Left cardiac atrium (tissue), 4 donors: ENCODE measurements at regions of chr7 and their contacts with region 1.

Region 1: GRCh38 chr7:139118234-139118804 is 8.8 kb upstream of the ZC3HAV1 start:
- DNase-seq: no peak
- ATAC-seq: peak in 1 of 2 donors; percentile 77

Region 2: DNA sequence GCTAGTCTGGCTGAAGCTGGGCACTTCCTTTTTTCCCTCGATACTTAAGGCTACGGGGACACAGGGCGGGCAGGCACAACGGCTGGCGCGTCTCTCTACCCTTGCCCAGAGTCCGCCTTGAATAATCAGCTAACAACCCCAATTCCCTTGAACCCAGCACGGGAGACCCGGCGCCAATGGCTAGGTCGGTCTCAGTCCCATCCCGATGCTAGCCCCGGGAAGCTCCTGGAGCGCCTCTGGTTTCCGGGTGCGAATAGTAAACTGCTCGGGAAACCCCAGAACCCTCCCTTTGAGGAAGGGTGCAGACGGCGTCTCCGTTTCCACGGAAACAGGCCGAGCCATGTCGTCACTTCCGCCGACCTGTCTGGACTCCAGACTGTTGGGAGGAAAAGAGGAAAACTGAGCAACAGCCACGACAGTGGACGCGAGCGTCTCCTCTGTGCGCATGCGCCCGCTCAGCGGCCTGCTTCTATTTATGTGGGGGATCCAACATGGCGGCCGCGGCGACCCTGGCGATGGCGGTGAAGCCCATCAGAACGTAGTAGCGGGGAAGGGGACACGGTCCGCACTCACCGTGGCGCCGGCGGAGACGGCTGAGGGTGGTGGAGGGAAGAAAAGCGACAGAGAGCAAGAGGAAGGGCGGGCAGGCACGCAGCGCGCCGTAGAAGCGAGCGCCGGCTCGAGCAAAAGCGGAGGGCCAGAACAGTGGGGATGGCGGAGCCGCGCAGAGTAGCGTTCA is 112.6 kb after region 1 on chr7 and contains the start of gene UBN2:
- intact Hi-C with region 1: loop called in 1 of 2 experiments (anchors 10 kb)
- DNase-seq: peak; percentile 97
- ATAC-seq: peak; percentile 98 to 99
- total RNA-seq, gene UBN2: 11.7 to 14.3 TPM